ENCODE measurements at regions of chr6 and their contacts with region 1.

Region 1: DNA sequence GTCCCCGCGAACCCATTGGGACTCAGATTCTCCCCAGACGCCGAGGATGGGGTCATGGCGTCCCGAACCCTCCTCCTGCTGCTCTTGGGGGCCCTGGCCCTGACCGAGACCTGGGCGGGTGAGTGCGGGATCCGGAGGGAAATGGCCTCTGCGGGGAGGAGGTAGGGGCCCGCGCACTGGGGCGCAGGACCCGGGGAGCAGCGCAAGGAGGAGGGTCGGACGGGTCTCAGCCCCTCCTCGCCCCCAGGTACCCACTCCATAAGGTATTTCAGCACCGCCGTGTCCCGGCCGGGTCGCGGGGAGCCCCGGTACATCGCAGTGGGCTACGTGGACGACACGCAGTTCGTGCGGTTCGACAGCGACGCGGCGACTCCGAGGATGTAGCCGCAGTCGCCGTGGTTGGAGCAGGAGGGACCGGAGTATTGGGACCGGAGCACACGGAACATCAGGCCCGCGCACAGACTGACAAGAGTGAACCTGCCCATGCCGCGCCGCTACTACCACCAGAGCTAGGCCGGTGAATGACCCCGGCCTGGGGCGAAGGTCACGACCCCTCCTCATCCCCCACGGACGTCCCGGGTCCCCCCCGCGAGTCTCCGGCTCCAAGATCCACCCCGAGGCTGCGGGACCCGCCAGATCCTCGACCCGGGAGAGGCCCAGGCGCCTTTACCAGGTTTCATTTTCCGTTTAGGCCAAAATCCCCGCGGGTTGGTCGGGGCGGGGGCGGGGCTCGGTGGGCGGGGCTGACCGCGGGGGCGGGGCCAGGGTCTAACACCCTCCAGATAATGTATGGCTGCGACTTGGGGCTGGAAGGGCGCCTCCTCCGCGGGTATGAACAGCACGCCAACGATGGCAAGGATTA is 15.7 kb upstream of the HLA-A start:
- DNase-seq: peak; percentile 75 to 95 (median 80)
- H3K4me3 ChIP-seq: peak overlapping the region; percentile 6 to 70
- H3K4me3 Mint-ChIP-seq: peak overlapping the region in 7 of 8 donors; percentile 90 to 97 (median 95)
- H3K27ac ChIP-seq: peak overlapping the region; percentile 99
- H3K27ac Mint-ChIP-seq: peak overlapping the region in 6 of 7 donors; percentile 84 to 100 (median 99)
- H3K4me1 ChIP-seq: peaks cover 15% of the 10 kb centered on the region
- H3K4me1 Mint-ChIP-seq: peaks cover 0 to 28% (median 11%) of the 10 kb centered on the region in 4 donors
- H3K27me3 ChIP-seq: no peaks in the 10 kb centered on the region
- H3K27me3 Mint-ChIP-seq: no peaks in the 10 kb centered on the region

Region 2: GRCh38 chr6:29887819-29888776 is 38.5 kb before region 1 on chr6:
- CTCF ChIA-PET with region 1: no interaction called
- POLR2A ChIA-PET with region 1: interaction called, 7 read pairs
- intact Hi-C with region 1: loop called (anchors 1 kb)
- DNase-seq: peak; percentile 69 to 96 (median 83)
- H3K4me3 ChIP-seq: peak overlapping the region; percentile 6 to 60
- H3K4me3 Mint-ChIP-seq: peak overlapping the region; percentile 41 to 96 (median 90)
- H3K27ac ChIP-seq: peak overlapping the region; percentile 91
- H3K27ac Mint-ChIP-seq: peak overlapping the region in 6 of 7 donors; percentile 92 to 99 (median 97)
- H3K4me1 ChIP-seq: peaks cover 15% of the 10 kb centered on the region
- H3K4me1 Mint-ChIP-seq: peaks cover 0 to 69% (median 14%) of the 10 kb centered on the region in 4 donors
- H3K27me3 ChIP-seq: no peaks in the 10 kb centered on the region
- H3K27me3 Mint-ChIP-seq: no peaks in the 10 kb centered on the region

Region 3: GRCh38 chr6:29976588-29977424 is 50.2 kb after region 1 on chr6:
- CTCF ChIA-PET with region 1: no interaction called
- POLR2A ChIA-PET with region 1: interaction called, 3 read pairs
- intact Hi-C with region 1: loop called (anchors 2 kb)
- DNase-seq: peak; percentile 41 to 60 (median 55)
- H3K4me3 ChIP-seq: peak overlapping the region; percentile 52 to 54
- H3K4me3 Mint-ChIP-seq: peak overlapping the region; percentile 87 to 96 (median 94)
- H3K27ac ChIP-seq: no peak overlapping the region
- H3K27ac Mint-ChIP-seq: peak overlapping the region in 5 of 7 donors; percentile 29 to 88 (median 74)
- H3K4me1 ChIP-seq: peaks cover 25% of the 10 kb centered on the region
- H3K4me1 Mint-ChIP-seq: peaks cover 30 to 34% (median 31%) of the 10 kb centered on the region in 4 donors
- H3K27me3 ChIP-seq: peaks cover 17% of the 10 kb centered on the region
- H3K27me3 Mint-ChIP-seq: peaks cover 22 to 41% of the 10 kb centered on the region in 2 donors